PC-9 (cell line): ENCODE measurements at regions of chr5 and their contacts with region 1.

Region 1: GRCh38 chr5:103393101-103393754 is 134.7 kb downstream of the MACIR start:
- DNase-seq: no peak
- H3K4me3 ChIP-seq: no peak overlapping the region
- H3K27ac ChIP-seq: no peak overlapping the region
- H3K4me1 ChIP-seq: no peaks in the 10 kb centered on the region
- H3K27me3 ChIP-seq: no peaks in the 10 kb centered on the region
- CTCF ChIP-seq: no peak

Region 2: DNA sequence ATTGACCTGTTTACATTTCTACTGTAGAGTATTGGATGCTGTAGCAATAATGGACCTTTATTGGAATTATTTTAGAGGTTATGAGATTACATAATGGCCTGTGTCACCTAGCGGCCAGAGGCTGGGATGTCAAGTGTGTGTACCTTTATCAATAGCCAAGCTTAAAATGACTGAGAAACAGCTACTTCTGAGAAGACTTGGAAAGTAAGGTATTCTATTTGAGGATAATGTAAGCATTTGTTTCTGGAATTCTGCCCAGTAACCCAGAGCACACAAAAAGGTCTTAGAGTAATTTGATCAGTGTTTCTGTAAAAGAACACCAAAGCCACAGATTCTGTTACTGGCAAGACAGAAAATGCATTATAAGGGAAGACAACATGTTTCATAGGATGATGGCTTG is 17.9 kb before region 1 on chr5:
- CTCF ChIA-PET with region 1: no interaction called
- POLR2A ChIA-PET with region 1: no interaction called
- intact Hi-C with region 1: no loop called
- DNase-seq: peak in 1 of 2 experiments; percentile 42
- H3K4me3 ChIP-seq: no peak overlapping the region
- H3K27ac ChIP-seq: no peak overlapping the region
- H3K4me1 ChIP-seq: peaks cover 7% of the 10 kb centered on the region; the same call in 1 of the 2 replicates
- H3K27me3 ChIP-seq: no peaks in the 10 kb centered on the region
- CTCF ChIP-seq: peak; percentile 53

Region 3: DNA sequence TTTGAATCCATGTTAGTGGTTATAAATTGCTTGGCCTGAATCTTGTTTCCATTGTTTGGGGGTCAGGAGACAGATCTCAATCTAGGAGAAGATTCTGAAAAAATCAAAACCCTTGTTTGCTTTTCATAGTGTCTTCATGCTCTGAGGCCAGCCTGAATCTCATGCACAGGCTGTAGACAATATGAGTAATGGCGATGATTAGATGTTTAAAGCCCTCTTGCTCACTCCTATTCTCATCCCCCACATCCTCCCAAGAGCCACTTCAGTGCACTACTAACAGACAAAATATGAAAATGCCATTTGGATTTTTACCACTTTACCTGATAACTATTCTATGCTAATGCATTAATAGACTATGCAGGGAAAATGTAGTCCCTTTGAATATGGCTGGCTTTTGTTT is 40.0 kb after region 1 on chr5:
- CTCF ChIA-PET with region 1: no interaction called
- POLR2A ChIA-PET with region 1: no interaction called
- intact Hi-C with region 1: no loop called
- DNase-seq: no peak
- H3K4me3 ChIP-seq: no peak overlapping the region
- H3K27ac ChIP-seq: no peak overlapping the region
- H3K4me1 ChIP-seq: no peaks in the 10 kb centered on the region
- H3K27me3 ChIP-seq: no peaks in the 10 kb centered on the region
- CTCF ChIP-seq: no peak

Region 4: DNA sequence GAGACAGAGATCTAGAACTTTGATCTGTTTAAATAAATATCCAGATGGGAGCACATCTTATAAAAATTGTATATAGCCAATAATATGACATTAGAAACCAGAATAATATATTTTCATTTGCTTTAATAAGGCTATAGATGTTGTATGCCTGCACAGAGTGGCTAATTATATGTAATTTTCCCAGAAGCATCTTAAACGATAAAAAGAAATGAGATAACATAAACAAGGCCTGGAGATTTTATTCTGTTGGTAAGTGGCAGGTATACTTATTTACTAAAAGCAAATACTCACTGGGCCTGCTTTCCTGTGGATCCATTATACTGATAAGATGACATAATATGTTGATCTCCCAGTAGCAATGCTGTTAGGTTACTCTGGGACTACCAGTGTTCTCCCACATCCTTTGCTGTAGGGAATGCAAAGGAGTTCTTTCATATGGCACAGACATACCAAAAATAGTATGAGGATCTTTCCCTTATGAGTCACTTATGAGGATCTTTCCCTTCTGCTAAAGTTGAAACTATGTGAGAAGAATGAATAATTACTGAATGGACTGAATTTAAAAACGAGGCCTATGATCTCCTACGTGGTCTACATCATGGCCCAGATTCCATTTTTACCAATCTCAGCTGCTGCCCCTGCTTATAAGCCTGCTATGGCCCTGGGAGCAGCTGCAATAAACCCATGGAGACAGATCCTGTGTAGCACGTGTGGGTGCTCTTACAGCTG is 57.3 kb after region 1 on chr5:
- CTCF ChIA-PET with region 1: interaction called, 12 read pairs
- POLR2A ChIA-PET with region 1: no interaction called
- intact Hi-C with region 1: no loop called
- DNase-seq: peak in 1 of 2 experiments; percentile 71
- H3K4me3 ChIP-seq: no peak overlapping the region
- H3K27ac ChIP-seq: peak overlapping the region; percentile 44
- H3K4me1 ChIP-seq: peaks cover 19% of the 10 kb centered on the region
- H3K27me3 ChIP-seq: no peaks in the 10 kb centered on the region
- CTCF ChIP-seq: no peak

Region 5: DNA sequence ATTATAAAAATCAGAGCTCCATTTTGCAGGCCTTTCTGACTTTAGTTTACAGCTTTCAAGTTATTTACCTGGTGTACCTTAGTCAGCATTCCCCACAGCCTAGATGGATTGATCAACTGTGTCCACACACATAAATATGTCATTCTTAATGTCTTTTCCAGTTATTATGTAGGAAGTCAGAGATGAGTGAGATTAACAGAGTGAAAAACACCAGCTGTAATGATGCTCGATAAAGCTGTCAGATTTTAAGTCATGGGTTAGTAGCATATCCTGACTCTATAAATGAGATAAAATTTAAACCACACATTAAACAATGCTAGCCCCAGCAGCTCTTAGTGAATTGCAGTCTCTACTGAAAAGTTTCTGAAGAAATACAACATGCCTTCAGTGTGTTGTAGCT is 120.5 kb after region 1 on chr5:
- CTCF ChIA-PET with region 1: interaction called, 16 read pairs
- POLR2A ChIA-PET with region 1: no interaction called
- intact Hi-C with region 1: no loop called
- DNase-seq: no peak
- H3K4me3 ChIP-seq: no peak overlapping the region
- H3K27ac ChIP-seq: no peak overlapping the region
- H3K4me1 ChIP-seq: no peaks in the 10 kb centered on the region
- H3K27me3 ChIP-seq: no peaks in the 10 kb centered on the region
- CTCF ChIP-seq: no peak